Activated CD4-positive, alpha-beta memory T cell treated with anti-CD3 and anti-CD28 coated beads, Interleukin-2, amount 10 ng/mL, durations not matched to agents 7 days and 5 days (primary cell): ENCODE measurements at regions of chr2 and their contacts with region 1.

Region 1: DNA sequence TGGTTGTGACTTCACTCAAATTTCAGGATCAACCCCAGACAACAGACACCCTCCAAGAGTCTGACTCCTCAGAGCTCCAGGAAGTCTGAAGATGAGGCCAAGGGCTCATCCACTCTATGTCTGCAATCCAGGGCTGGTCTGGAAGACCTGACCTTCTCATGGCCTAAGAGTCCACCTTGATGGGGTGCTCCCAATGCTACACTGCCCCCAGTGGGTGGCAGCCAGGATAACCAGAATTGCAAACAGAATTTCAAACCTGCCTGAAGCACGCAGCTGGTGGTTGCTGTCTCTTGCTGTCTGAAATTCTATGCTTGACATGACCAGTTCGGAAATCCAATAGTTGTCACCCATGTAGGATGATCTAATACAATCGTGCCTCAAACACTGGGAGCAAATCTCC is 96.0 kb downstream of the UXS1 start:
- DNase-seq: no peak
- H3K4me3 Mint-ChIP-seq: no peak overlapping the region
- H3K27ac Mint-ChIP-seq: peak overlapping the region; percentile 44
- H3K4me1 Mint-ChIP-seq: peaks cover 51% of the 10 kb centered on the region
- H3K27me3 Mint-ChIP-seq: no peaks in the 10 kb centered on the region

Region 2: GRCh38 chr2:105744091-105744908 is 353.8 kb before region 1 on chr2:
- CTCF ChIA-PET with region 1: interaction called, 7 read pairs
- POLR2A ChIA-PET with region 1: interaction called, 17 read pairs
- DNase-seq: peak; percentile 68
- H3K4me3 Mint-ChIP-seq: peak overlapping the region; percentile 77
- H3K27ac Mint-ChIP-seq: peak overlapping the region; percentile 83
- H3K4me1 Mint-ChIP-seq: peaks cover 74% of the 10 kb centered on the region
- H3K27me3 Mint-ChIP-seq: no peaks in the 10 kb centered on the region

Region 3: GRCh38 chr2:105797298-105797819 is 300.7 kb before region 1 on chr2:
- CTCF ChIA-PET with region 1: interaction called, 4 read pairs
- POLR2A ChIA-PET with region 1: interaction called, 27 read pairs
- DNase-seq: peak; percentile 72
- H3K4me3 Mint-ChIP-seq: peak overlapping the region; percentile 66
- H3K27ac Mint-ChIP-seq: peak overlapping the region; percentile 98
- H3K4me1 Mint-ChIP-seq: peaks cover 93% of the 10 kb centered on the region
- H3K27me3 Mint-ChIP-seq: no peaks in the 10 kb centered on the region

Region 4: DNA sequence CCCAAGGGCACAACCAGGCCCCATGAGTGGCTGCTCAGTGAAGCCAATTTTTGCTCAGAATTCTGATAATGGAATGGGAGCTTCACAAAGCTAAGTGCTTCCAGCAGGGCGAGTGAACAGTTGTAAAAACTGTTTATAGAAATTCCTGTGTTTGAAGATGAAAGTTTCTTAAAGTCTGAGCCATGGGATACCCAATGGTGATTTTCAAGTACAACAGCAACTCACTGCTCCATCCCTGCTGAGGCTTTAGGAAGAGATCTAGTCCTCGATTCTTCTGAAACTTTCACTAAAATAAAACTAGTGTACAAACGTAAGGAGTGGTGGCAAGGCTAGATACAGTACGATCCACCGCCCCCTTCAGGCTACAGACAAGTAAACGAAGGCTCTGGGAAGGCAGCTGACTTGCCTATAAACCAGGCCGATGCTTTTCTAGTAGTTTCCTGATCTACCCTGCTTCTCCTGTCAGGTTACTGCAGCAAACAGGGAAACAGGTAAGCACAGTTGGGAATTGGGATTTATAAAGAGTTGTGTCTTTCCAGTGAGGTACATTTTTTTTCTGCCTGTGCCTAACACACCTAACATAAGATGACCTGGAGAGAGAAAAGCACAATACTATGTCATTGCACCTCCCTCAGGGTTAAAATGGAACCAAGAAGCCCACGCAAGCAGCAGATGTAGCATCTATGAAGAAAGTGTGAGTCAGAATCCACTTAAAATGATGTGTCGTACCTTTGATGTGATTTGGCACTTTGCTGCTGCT is 12.7 kb before region 1 on chr2:
- CTCF ChIA-PET with region 1: interaction called, 17 read pairs
- POLR2A ChIA-PET with region 1: interaction called, 15 read pairs
- DNase-seq: peak; percentile 73
- H3K4me3 Mint-ChIP-seq: peak overlapping the region; percentile 7
- H3K27ac Mint-ChIP-seq: peak overlapping the region; percentile 69
- H3K4me1 Mint-ChIP-seq: peaks cover 43% of the 10 kb centered on the region
- H3K27me3 Mint-ChIP-seq: no peaks in the 10 kb centered on the region

Region 5: GRCh38 chr2:106261871-106262321 is 163.8 kb after region 1 on chr2:
- CTCF ChIA-PET with region 1: no interaction called
- POLR2A ChIA-PET with region 1: no interaction called
- DNase-seq: no peak
- H3K4me3 Mint-ChIP-seq: peak overlapping the region; percentile 53
- H3K27ac Mint-ChIP-seq: no peak overlapping the region
- H3K4me1 Mint-ChIP-seq: peaks cover 5% of the 10 kb centered on the region
- H3K27me3 Mint-ChIP-seq: peaks cover 3% of the 10 kb centered on the region